SK-N-SH (cell line): ENCODE measurements at regions of chr16 and their contacts with region 1.

Region 1: GRCh38 chr16:57591086-57591869 is 37.2 kb upstream of the ADGRG1 start:
- DNase-seq: peak; percentile 81
- H3K4me3 ChIP-seq: peak overlapping the region in 1 of 2 experiments; percentile 34; a peak in 2 of 4 replicates
- H3K27ac ChIP-seq: peak overlapping the region in 1 of 2 experiments; percentile 55; a peak in 2 of 4 replicates
- H3K4me1 ChIP-seq: peaks cover 0 to 13% of the 10 kb centered on the region in 2 experiments; a peak in 1 of 4 replicates
- H3K27me3 ChIP-seq: no peaks in the 10 kb centered on the region; the same call in 1 of the 2 replicates
- CTCF ChIP-seq: peak; percentile 94
- EP300 ChIP-seq: no peak
- RAD21 ChIP-seq: peak; percentile 85

Region 2: DNA sequence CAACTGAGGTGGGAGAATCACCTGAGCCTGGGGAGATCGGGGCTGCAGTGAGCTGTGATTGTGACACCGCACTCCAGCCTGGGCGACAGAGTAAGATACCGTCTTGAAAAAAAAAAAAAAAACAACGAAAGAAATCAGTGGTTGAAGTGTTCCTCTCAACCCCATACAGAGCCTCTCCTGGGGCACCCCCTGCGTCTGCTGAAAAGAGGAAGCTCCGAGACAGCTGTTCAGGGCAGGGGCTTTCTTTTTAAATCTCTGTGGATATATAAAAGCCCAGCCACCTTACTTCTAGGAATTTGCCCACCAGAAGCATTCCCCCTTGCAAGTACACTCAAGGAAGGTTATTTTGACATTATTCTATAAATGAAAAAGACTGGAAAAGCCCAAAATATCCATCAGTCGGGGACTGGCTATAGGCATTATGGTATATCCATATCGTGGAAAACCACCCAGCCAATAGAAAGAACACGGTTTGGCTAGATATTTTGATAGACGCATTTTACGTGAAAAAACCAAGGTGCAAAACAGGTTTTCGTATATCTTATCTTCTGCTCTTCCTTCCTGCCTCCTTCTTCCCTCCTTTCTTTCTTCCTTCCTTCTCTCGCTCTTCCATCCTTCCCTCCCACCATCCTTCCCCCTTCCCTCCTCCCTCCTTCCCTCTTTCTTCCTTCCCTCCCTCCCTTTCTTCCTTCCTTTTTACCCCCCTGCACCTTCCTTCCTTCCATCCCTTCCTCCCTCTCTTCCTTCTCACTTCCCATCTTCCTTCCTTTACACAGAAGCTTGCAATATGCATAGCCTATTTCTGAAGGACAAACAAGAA is 241.9 kb before region 1 on chr16:
- CTCF ChIA-PET with region 1: no interaction called
- POLR2A ChIA-PET with region 1: no interaction called
- DNase-seq: no peak
- H3K4me3 ChIP-seq: no peak overlapping the region
- H3K27ac ChIP-seq: no peak overlapping the region
- H3K4me1 ChIP-seq: no peaks in the 10 kb centered on the region
- H3K27me3 ChIP-seq: peaks cover 7% of the 10 kb centered on the region; the same call in 1 of the 2 replicates
- CTCF ChIP-seq: no peak
- EP300 ChIP-seq: no peak
- RAD21 ChIP-seq: no peak

Region 3: GRCh38 chr16:57609541-57610401 is 18.5 kb after region 1 on chr16:
- CTCF ChIA-PET with region 1: interaction called, 11 read pairs
- POLR2A ChIA-PET with region 1: no interaction called
- DNase-seq: peak; percentile 30
- H3K4me3 ChIP-seq: no peak overlapping the region
- H3K27ac ChIP-seq: no peak overlapping the region
- H3K4me1 ChIP-seq: peaks cover 0 to 21% of the 10 kb centered on the region in 2 experiments; a peak in 2 of 4 replicates
- H3K27me3 ChIP-seq: no peaks in the 10 kb centered on the region
- CTCF ChIP-seq: no peak; the same call in 1 of the 2 replicates
- EP300 ChIP-seq: no peak
- RAD21 ChIP-seq: no peak

Region 4: DNA sequence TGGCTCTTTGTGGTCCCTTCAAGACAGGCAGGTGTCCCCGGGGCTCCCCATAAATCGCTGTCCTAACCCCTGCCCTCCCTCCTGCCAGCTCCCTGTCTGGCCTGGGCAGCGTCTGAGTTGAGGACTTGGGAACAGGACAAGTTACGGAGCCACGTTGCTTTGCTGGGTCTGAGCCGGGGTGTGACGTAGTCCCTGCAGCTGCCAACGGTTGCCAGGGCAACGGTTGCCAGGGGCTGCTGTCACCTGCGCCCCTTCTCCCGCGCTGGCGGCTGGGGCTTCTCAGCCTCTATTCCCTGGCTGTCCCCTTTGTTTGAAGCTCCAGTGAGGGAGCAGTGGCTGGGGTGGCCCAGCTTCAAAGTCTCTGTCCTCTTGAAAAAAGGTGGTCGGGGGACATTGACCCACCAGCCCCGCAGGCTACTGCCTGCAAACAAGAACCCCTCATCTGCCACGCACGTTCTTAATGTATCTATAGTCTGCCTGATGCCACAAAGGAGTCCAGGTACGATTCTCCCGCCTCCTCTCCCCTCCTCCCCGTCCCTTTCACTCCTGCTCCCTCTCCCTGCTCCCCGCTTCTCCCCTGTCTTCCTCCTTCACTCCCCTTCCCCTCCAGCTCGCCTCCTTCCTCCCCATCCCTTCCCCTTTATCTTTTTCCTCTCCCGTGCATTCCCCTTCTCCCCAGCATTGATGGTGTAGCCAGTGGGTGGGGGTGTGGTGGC is 48.1 kb after region 1 on chr16:
- CTCF ChIA-PET with region 1: interaction called, 18 read pairs
- POLR2A ChIA-PET with region 1: no interaction called
- DNase-seq: peak; percentile 93
- H3K4me3 ChIP-seq: no peak overlapping the region
- H3K27ac ChIP-seq: no peak overlapping the region
- H3K4me1 ChIP-seq: peaks cover 0 to 10% of the 10 kb centered on the region in 2 experiments; a peak in 1 of 4 replicates
- H3K27me3 ChIP-seq: no peaks in the 10 kb centered on the region
- CTCF ChIP-seq: no peak
- EP300 ChIP-seq: no peak
- RAD21 ChIP-seq: no peak

Region 5: DNA sequence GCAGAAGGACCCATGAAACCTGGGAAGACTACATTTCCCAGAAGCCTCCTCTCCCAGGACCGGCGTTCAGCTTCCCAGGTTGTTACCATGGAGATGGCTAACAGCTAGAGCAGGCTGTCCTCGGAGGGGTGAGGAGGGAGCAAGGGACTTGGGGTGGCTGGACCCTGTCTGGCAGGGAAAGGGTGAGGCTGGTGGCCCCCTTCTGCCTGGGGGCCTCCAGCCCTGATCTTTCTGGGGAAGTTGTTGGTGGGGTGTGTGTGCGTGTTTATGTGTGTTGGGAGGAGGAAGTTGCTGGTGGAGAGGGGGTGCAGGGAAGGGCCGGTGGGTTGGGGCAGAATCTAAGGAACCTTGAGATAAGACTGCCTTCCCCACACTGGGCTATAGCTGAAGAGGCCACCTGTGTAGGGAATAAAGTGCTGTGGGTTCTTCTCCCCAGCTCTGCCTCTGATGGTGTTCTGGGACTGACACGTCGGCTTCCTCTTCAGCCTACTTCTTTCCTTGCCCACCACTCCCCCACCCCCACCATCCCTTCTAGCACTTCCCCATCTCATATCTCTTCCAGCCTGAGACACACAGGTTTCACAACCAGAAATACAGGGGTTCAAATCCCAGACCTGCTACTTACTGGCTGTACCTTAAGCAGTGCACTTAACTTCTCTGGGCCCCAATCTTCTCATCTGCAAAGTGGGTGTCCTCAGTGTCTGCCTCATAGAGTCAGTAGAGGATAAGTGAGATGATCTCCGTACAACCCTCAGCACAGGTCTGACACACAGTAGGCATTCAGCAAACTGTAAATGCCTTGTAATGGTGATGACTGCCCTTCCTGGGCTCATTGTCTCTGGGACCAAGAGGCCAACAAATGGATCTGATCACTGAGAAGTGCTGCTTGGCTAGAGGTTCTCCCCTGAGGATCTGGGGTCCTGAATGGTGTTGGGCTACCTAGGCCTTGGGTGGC is 103.7 kb after region 1 on chr16 and contains the start of gene DRC7:
- CTCF ChIA-PET with region 1: no interaction called
- POLR2A ChIA-PET with region 1: no interaction called
- DNase-seq: peak; percentile 90
- H3K4me3 ChIP-seq: peak within 1 kb of the TSS in 1 of 2 experiments; percentile 44; a peak in 2 of 4 replicates
- H3K27ac ChIP-seq: no peak within 1 kb of the TSS
- H3K4me1 ChIP-seq: peaks cover 0 to 6% of the 10 kb centered on the region in 2 experiments; a peak in 1 of 4 replicates
- H3K27me3 ChIP-seq: no peaks in the 10 kb centered on the region; the same call in 1 of the 2 replicates
- CTCF ChIP-seq: no peak
- EP300 ChIP-seq: no peak
- RAD21 ChIP-seq: no peak
- polyA plus RNA-seq, gene DRC7: 0.58 and 0.94 TPM in 2 replicates

Region 6: DNA sequence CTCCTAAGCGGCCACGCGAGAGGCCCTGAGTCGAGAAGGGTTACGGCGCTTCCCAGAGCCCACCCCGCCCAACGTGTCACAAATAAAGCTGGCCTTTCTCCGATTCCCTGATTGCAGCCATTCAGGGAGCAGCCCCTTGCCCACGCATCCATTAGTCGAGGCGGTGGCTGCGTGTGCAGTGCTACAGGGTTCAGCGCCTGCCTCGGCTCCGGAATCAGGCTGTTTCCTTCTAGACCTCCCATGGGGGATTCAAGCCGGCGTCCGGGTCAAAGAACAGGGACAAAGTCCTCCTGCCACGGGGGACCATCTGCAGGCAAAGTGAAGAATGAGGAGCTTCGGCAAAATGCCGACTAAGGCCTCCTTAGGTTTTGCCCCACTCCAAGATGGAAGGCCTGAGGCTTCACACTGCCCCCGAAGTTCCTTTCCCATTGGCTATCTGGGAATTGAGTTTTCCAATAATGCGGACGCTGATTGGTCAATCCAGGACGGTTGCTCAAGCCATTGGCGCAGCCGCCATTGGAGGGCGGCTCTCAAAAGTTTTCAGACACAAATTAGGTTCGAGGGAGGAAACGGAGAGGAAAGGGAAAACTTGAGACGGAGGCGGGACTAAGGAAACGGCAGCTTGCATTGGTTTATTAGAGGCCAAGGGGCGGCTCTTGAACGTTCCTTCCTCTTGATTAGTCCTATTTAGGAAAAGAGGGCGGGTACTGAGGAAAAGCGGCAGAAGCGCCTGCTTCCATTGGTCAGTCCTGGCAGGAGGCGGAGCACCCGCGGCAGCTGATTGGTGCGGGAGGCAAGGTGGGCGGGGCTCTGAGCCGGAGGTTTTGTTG is 143.9 kb after region 1 on chr16:
- CTCF ChIA-PET with region 1: interaction called, 15 read pairs
- POLR2A ChIA-PET with region 1: no interaction called
- DNase-seq: peak; percentile 98
- H3K4me3 ChIP-seq: peak overlapping the region; percentile 61 to 83
- H3K27ac ChIP-seq: peak overlapping the region; percentile 72 to 85
- H3K4me1 ChIP-seq: peaks cover 9 to 15% of the 10 kb centered on the region in 2 experiments; a peak in 2 of 4 replicates
- H3K27me3 ChIP-seq: no peaks in the 10 kb centered on the region
- CTCF ChIP-seq: no peak
- EP300 ChIP-seq: no peak
- RAD21 ChIP-seq: no peak

Region 7: GRCh38 chr16:57748596-57748995 is 157.3 kb after region 1 on chr16:
- CTCF ChIA-PET with region 1: no interaction called
- POLR2A ChIA-PET with region 1: no interaction called
- DNase-seq: no peak
- H3K4me3 ChIP-seq: no peak overlapping the region
- H3K27ac ChIP-seq: no peak overlapping the region; a peak in 1 of 4 replicates
- H3K4me1 ChIP-seq: no peaks in the 10 kb centered on the region; a peak in 1 of 4 replicates
- H3K27me3 ChIP-seq: no peaks in the 10 kb centered on the region
- CTCF ChIP-seq: no peak
- EP300 ChIP-seq: no peak
- RAD21 ChIP-seq: no peak